Kidney (tissue), 22 donors: ENCODE measurements at regions of chr9 and their contacts with region 1.

Region 1: DNA sequence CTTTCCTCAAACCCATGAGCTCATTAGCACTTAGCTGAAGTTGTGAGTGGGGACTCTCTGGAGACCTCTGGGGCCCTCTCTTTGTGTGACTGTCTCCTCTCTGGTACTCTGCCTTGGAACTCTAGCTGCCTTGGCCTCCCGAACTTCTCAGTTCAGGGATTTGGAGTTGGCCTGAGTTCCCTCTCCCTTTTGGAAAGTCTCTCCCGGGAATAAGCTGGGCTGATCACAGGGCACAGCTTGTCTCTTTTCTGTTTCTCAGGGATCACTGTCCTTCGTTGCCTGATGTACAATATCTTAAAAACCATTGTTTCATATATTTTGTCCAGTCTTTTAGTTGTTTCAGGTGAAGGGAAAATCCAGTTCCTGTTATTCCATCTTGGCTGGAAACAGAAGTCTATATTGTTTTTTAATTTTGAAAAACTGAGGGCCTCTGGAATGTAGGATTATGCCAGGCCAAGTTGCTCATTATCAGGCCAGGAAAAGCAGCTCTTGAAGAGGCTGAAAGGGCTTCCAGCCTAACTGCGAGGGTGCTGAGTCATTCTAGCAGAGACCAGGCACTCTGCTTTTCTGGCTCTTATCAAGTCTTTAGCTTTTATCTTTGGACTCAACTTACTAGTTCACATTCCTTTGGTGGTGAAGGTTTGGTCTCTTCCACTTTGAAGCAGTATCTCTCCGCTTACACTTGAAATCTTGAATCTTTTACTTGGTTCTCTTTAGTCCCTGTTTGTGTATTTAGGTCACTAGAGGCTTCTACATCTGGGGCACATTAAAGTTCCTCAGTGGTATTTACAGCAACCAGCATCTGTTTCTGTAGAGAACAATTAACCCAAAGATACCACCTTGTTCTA is 8.4 kb upstream of the RGS3 start:
- DNase-seq: peak in 1 of 5 donors; percentile 29
- H3K4me3 ChIP-seq: no peak overlapping the region
- H3K27ac ChIP-seq: peak overlapping the region; percentile 52 to 83
- H3K4me1 ChIP-seq: peaks cover 0 to 16% (median 11%) of the 10 kb centered on the region in 3 donors
- H3K27me3 ChIP-seq: no peaks in the 10 kb centered on the region
- CTCF ChIP-seq: no peak

Region 2: GRCh38 chr9:113591001-113591898 is 136.1 kb after region 1 on chr9:
- intact Hi-C with region 1: loop called (anchors 5 kb)
- DNase-seq: peak; percentile 86 to 92 (median 89)
- H3K4me3 ChIP-seq: no peak overlapping the region
- H3K27ac ChIP-seq: peak overlapping the region; percentile 61 to 75
- H3K4me1 ChIP-seq: peaks cover 0 to 45% (median 38%) of the 10 kb centered on the region in 3 donors
- H3K27me3 ChIP-seq: no peaks in the 10 kb centered on the region
- CTCF ChIP-seq: peak; percentile 97